Ovary (tissue), 10 donors: ENCODE measurements at regions of chr15 and their contacts with region 1.

Region 1: DNA sequence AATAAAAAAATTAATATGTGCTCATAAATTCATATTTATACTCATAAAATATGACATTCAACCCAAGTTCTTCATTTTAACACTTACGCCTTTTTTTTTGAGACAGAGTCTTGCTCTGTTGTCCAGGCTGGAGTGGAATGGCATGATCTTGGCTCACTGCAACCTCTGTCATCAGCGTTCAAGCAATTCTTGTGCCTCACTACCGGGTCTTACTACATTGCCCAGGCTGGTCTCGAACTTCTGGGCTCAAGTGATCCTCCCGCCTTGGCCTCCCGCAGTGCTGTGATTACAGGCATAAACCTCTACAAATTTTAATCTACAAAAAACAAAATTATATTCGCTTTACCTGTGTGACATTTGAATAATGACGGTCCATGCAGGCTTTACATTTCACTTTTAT is 74.1 kb upstream of the SNRPN start:
- DNase-seq: no peak
- H3K4me3 ChIP-seq: no peak overlapping the region
- H3K27ac ChIP-seq: no peak overlapping the region
- H3K4me1 ChIP-seq: no peaks in the 10 kb centered on the region
- H3K27me3 ChIP-seq: no peaks in the 10 kb centered on the region
- CTCF ChIP-seq: no peak
- EP300 ChIP-seq: no peak
- POLR2A ChIP-seq: no peak

Region 2: DNA sequence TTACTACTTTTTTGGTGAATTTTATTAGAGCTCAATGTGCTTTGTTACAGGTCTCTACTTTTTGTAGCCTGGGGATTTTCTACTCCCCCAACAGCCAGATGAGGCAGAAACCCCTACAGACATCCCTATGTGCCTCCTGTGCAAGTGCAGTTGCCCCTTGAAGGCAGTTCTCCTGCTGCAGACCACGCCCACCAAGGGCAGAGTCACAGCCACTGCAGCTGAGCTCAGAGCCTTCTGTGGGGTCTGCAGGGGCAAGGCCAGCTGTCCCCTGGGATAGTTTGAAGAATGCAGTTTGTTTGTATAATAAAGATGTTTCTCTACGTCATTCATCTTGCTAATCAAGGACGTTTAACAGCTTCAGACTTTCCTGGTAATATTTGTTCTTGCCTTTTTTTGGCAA is 128.3 kb before region 1 on chr15:
- intact Hi-C with region 1: no loop called
- DNase-seq: no peak
- H3K4me3 ChIP-seq: no peak overlapping the region
- H3K27ac ChIP-seq: no peak overlapping the region
- H3K4me1 ChIP-seq: no peaks in the 10 kb centered on the region
- H3K27me3 ChIP-seq: no peaks in the 10 kb centered on the region
- CTCF ChIP-seq: no peak
- EP300 ChIP-seq: no peak
- POLR2A ChIP-seq: no peak

Region 3: DNA sequence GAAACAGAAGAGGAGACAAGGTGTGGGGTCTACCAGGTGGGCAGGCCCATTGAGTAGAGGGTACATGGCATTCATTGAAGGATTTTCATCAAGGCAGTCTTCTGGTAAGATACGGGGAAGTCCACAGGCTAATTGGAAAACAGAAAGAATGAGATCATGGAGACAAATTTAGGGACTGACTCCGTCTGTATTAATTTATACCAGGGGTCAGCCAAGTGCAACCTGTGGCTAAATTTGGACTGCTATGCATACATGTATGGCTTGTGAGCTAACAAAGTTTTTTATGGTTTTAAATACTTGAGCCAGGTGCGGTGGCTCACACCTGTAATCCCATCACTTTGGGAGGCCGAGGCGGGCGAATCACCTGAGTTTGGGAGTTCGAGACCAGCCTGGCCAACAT is 53.1 kb after region 1 on chr15:
- intact Hi-C with region 1: loop called in 1 of 4 experiments (anchors 10 kb)
- DNase-seq: no peak
- H3K4me3 ChIP-seq: no peak overlapping the region
- H3K27ac ChIP-seq: no peak overlapping the region
- H3K4me1 ChIP-seq: no peaks in the 10 kb centered on the region
- H3K27me3 ChIP-seq: no peaks in the 10 kb centered on the region
- CTCF ChIP-seq: no peak
- EP300 ChIP-seq: no peak
- POLR2A ChIP-seq: no peak